AG04450 (cell line): ENCODE measurements at regions of chr15 and their contacts with region 1.

Region 1: DNA sequence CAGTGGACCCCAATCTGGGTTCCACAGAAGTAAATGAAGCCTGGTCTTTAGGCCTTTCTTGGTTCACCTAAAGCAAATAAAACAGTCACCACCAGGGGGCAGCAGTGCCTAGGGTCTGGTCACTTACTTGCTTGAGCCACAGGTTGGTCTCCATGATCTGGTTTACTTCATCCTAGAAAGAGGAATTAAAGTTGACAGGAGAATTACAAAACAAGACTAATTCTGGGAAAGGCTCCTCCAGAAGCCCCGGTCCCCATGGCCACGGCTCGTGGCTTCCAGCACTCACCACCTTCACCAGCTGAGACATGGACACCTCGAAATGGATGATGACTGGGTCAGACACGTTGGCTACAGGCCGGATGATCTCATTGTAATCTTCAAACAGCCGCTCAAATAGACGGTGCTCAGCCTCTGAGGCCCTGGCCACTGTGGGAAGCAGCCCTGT is 2.3 kb downstream of the CHRNA3 start:
- DNase-seq: peak; percentile 68
- H3K4me3 ChIP-seq: no peak overlapping the region
- H3K27ac ChIP-seq: no peak overlapping the region
- H3K27me3 ChIP-seq: peaks cover 31% of the 10 kb centered on the region
- CTCF ChIP-seq: peak; percentile 79

Region 2: DNA sequence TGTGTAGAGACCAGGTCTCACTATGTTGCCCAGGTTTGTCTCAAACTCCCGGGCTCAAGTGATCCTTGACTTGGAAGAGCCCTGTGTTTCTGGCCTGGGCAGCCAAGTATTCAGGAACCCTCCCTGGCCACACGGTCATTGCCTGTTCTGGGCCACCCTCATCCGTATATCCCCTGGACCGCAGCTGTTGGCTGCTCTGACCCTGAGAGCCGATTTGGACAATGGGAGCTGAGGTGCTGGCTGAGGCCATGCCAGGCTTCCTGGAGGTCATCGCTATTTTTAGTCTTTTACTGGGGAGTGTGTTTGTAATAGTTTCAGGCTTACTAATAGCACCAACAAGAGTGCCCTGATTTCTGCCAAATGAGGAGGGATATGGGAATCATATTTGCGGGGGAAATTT is 132.1 kb after region 1 on chr15:
- CTCF ChIA-PET with region 1: interaction called, 12 read pairs
- POLR2A ChIA-PET with region 1: no interaction called
- DNase-seq: no peak
- H3K4me3 ChIP-seq: no peak overlapping the region
- H3K27ac ChIP-seq: no peak overlapping the region
- H3K27me3 ChIP-seq: no peaks in the 10 kb centered on the region
- CTCF ChIP-seq: no peak